GM12878 (cell line): ENCODE measurements at regions of chr13 and their contacts with region 1.

Region 1: GRCh38 chr13:80571346-80572307 is 230.7 kb upstream of the SPRY2 start:
- DNase-seq: no peak
- ATAC-seq: no peak
- H3K4me3 ChIP-seq: no peak overlapping the region
- H3K27ac ChIP-seq: no peak overlapping the region
- H3K4me1 ChIP-seq: no peaks in the 10 kb centered on the region
- H3K27me3 ChIP-seq: no peaks in the 10 kb centered on the region
- CTCF ChIP-seq: no peak
- EP300 ChIP-seq: no peak
- POLR2A ChIP-seq: no peak
- RAD21 ChIP-seq: no peak

Region 2: DNA sequence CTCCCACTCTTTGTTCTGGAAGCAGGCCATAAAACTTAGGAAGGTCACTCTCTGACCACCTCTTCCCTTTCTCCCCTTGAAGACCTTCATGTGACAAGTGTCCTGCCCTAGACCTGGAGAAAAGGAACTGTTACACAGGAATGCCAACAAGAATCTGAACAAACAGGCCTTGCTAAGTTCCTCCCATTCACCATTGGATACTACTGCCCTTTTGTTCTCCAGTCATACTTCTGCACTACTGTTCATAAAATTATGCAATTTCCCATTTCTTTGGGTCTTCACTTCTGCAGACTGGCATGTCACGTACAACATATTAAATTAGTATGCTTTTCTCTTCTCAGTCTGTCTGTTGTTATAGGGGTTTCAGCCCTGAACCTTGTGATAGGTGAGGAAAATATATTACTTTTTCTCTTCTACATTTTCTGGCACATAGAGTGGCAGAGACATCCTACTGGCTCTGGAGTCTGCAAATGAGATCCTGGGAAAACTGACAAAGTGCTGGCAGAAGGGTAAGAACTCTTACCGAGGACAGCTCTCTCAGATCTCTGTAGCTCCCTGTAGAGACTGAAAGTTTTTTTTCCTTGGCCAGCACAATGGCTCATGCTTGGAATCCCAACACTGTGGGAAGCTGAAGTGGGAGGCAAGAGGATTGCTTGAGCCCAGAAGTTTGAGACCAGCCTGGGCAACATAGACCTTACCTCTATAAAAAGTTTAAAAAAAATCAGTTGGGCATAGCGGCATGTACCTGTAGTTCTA is 143.1 kb before region 1 on chr13:
- CTCF ChIA-PET with region 1: no interaction called
- POLR2A ChIA-PET with region 1: no interaction called
- RAD21 ChIA-PET with region 1: no interaction called
- SMC1A ChIA-PET with region 1: no interaction called
- in situ Hi-C with region 1: no loop called
- intact Hi-C with region 1: no loop called
- DNase-seq: no peak
- ATAC-seq: no peak
- H3K4me3 ChIP-seq: no peak overlapping the region
- H3K27ac ChIP-seq: no peak overlapping the region
- H3K4me1 ChIP-seq: no peaks in the 10 kb centered on the region
- H3K27me3 ChIP-seq: no peaks in the 10 kb centered on the region
- CTCF ChIP-seq: no peak
- EP300 ChIP-seq: no peak
- POLR2A ChIP-seq: no peak
- RAD21 ChIP-seq: no peak

Region 3: GRCh38 chr13:80524447-80525215 is 47.0 kb before region 1 on chr13:
- CTCF ChIA-PET with region 1: no interaction called
- POLR2A ChIA-PET with region 1: no interaction called
- RAD21 ChIA-PET with region 1: no interaction called
- SMC1A ChIA-PET with region 1: no interaction called
- in situ Hi-C with region 1: no loop called
- intact Hi-C with region 1: no loop called
- DNase-seq: no peak
- ATAC-seq: no peak
- H3K4me3 ChIP-seq: no peak overlapping the region
- H3K27ac ChIP-seq: no peak overlapping the region
- H3K4me1 ChIP-seq: no peaks in the 10 kb centered on the region
- H3K27me3 ChIP-seq: no peaks in the 10 kb centered on the region
- CTCF ChIP-seq: no peak
- EP300 ChIP-seq: no peak
- POLR2A ChIP-seq: no peak
- RAD21 ChIP-seq: no peak

Region 4: GRCh38 chr13:80555796-80556678 is 15.6 kb before region 1 on chr13:
- CTCF ChIA-PET with region 1: interaction called, 3 read pairs
- POLR2A ChIA-PET with region 1: no interaction called
- RAD21 ChIA-PET with region 1: no interaction called
- SMC1A ChIA-PET with region 1: interaction called, 11 read pairs
- in situ Hi-C with region 1: no loop called
- intact Hi-C with region 1: no loop called
- DNase-seq: no peak
- ATAC-seq: no peak
- H3K4me3 ChIP-seq: no peak overlapping the region
- H3K27ac ChIP-seq: no peak overlapping the region
- H3K4me1 ChIP-seq: no peaks in the 10 kb centered on the region
- H3K27me3 ChIP-seq: no peaks in the 10 kb centered on the region
- CTCF ChIP-seq: no peak
- EP300 ChIP-seq: no peak
- POLR2A ChIP-seq: no peak
- RAD21 ChIP-seq: no peak

Region 5: GRCh38 chr13:80591976-80592740 is 20.5 kb after region 1 on chr13:
- CTCF ChIA-PET with region 1: no interaction called
- POLR2A ChIA-PET with region 1: no interaction called
- RAD21 ChIA-PET with region 1: no interaction called
- SMC1A ChIA-PET with region 1: interaction called, 10 read pairs
- in situ Hi-C with region 1: no loop called
- intact Hi-C with region 1: no loop called
- DNase-seq: no peak
- ATAC-seq: no peak
- H3K4me3 ChIP-seq: no peak overlapping the region
- H3K27ac ChIP-seq: no peak overlapping the region
- H3K4me1 ChIP-seq: no peaks in the 10 kb centered on the region
- H3K27me3 ChIP-seq: no peaks in the 10 kb centered on the region
- CTCF ChIP-seq: no peak
- EP300 ChIP-seq: no peak
- POLR2A ChIP-seq: no peak
- RAD21 ChIP-seq: no peak

Region 6: GRCh38 chr13:80642641-80643040 is 71.0 kb after region 1 on chr13:
- CTCF ChIA-PET with region 1: no interaction called
- POLR2A ChIA-PET with region 1: no interaction called
- RAD21 ChIA-PET with region 1: no interaction called
- SMC1A ChIA-PET with region 1: no interaction called
- in situ Hi-C with region 1: no loop called
- intact Hi-C with region 1: no loop called
- DNase-seq: no peak
- ATAC-seq: no peak
- H3K4me3 ChIP-seq: no peak overlapping the region
- H3K27ac ChIP-seq: no peak overlapping the region
- H3K4me1 ChIP-seq: no peaks in the 10 kb centered on the region
- H3K27me3 ChIP-seq: no peaks in the 10 kb centered on the region
- CTCF ChIP-seq: no peak
- EP300 ChIP-seq: no peak
- POLR2A ChIP-seq: no peak
- RAD21 ChIP-seq: no peak